Colonic mucosa (tissue), 4 donors: ENCODE measurements at regions of chr5 and their contacts with region 1.

Region 1: DNA sequence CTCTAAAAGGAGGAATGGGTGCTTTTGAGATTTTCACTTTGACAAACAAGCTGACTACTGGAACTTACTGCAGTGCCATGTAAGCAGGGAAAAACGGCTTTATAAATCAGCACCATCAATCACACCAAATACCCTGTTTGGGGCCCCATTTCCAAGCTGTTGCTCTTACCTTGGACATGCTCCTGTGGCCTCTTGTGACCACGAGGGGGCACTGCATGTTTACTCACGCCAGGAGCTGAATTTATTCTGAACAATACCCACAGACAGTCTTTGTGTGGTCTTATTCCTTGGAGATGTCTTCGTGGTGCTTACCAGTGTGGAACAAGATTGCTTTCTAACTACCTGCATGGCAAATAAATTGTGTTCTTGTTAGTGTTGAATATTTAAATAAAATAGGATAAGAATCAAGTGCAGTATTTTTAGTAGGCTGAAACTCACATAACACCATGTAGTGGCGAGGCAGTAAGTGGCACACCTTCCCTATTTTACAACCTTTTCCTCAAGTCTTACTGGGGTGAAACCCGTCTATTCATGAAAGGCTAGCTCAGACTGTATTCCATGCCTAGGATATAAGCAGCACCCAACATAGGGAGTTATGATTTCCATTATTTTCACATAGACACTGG is 155.5 kb upstream of the NMUR2 start:
- DNase-seq: peak; percentile 33
- H3K4me3 ChIP-seq: no peak overlapping the region
- H3K27ac ChIP-seq: no peak overlapping the region
- H3K4me1 ChIP-seq: no peaks in the 10 kb centered on the region
- H3K27me3 ChIP-seq: no peaks in the 10 kb centered on the region
- CTCF ChIP-seq: peak; percentile 84

Region 2: GRCh38 chr5:152271420-152271819 is 289.2 kb before region 1 on chr5:
- intact Hi-C with region 1: no loop called
- DNase-seq: no peak
- H3K4me3 ChIP-seq: no peak overlapping the region
- H3K27ac ChIP-seq: no peak overlapping the region
- H3K4me1 ChIP-seq: no peaks in the 10 kb centered on the region
- H3K27me3 ChIP-seq: no peaks in the 10 kb centered on the region
- CTCF ChIP-seq: no peak

Region 3: DNA sequence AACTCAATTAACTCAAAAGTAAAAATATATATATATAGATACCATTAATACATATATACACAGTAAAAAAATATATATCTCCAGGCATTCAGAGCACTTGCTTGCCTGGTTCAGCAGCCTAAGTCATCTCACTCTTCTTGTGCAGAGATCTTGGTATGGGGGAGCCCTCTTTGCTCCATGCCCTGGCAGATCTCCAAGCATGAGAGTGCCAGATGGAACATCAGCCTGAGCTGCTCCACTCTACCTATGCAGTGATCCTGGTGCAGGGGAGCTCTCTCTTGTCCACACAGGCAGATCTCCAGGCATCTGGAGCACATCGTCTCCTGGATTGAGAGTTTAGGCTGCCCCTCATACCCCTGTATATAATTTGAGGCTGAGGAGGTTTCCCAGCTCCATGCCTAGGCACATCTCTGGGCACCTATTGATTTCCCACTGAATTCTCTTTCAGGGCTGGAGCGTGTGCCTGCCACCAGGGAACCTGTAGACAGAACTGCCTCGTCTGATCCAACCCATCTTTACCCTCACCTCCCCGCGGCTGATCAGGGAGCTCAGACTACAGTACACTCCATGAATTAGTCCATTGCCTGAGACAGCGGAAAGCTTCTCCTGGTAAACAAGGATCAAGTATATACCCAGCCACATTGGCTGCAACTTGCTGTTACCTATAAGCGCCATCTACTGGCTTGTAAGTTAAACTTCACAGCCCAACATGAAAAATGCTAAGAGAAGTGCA is 587.4 kb after region 1 on chr5:
- intact Hi-C with region 1: loop called (anchors 5 kb)
- DNase-seq: no peak
- H3K4me3 ChIP-seq: no peak overlapping the region
- H3K27ac ChIP-seq: no peak overlapping the region
- H3K4me1 ChIP-seq: no peaks in the 10 kb centered on the region
- H3K27me3 ChIP-seq: no peaks in the 10 kb centered on the region
- CTCF ChIP-seq: peak; percentile 37